ENCODE measurements at regions of chr13 and their contacts with region 1.

Region 1: GRCh38 chr13:41193919-41194824 is at the start of gene KBTBD7:
- DNase-seq: peak; percentile 98
- H3K4me3 ChIP-seq: peak within 1 kb of the TSS; percentile 42 to 65 (median 61)
- H3K27ac ChIP-seq: peak within 1 kb of the TSS; percentile 67
- H3K4me1 ChIP-seq: peaks cover 8% of the 10 kb centered on the region
- H3K27me3 ChIP-seq: no peaks in the 10 kb centered on the region
- CTCF ChIP-seq: no peak
- total RNA-seq, gene KBTBD7: 4.3 to 7.2 TPM

Region 2: GRCh38 chr13:40895227-40896184 is 298.7 kb before region 1 on chr13:
- CTCF ChIA-PET with region 1: no interaction called
- dilution Hi-C with region 1: no loop called
- in situ Hi-C with region 1: no loop called
- intact Hi-C with region 1: no loop called
- DNase-seq: peak; percentile 75
- H3K4me3 ChIP-seq: no peak overlapping the region
- H3K27ac ChIP-seq: no peak overlapping the region
- H3K4me1 ChIP-seq: no peaks in the 10 kb centered on the region
- H3K27me3 ChIP-seq: no peaks in the 10 kb centered on the region
- CTCF ChIP-seq: no peak

Region 3: GRCh38 chr13:40992678-40993518 is 201.3 kb before region 1 on chr13:
- CTCF ChIA-PET with region 1: no interaction called
- dilution Hi-C with region 1: no loop called
- in situ Hi-C with region 1: no loop called
- intact Hi-C with region 1: loop called (anchors 5 kb)
- DNase-seq: no peak
- H3K4me3 ChIP-seq: no peak overlapping the region
- H3K27ac ChIP-seq: peak overlapping the region; percentile 88
- H3K4me1 ChIP-seq: peaks cover 28% of the 10 kb centered on the region
- H3K27me3 ChIP-seq: no peaks in the 10 kb centered on the region
- CTCF ChIP-seq: peak in 1 of 2 donors; percentile 16

Region 4: GRCh38 chr13:41061075-41061913 is 132.9 kb before region 1 on chr13 and contains the start of gene WBP4:
- CTCF ChIA-PET with region 1: no interaction called
- dilution Hi-C with region 1: no loop called
- in situ Hi-C with region 1: loop called in 1 of 2 experiments (anchors 10 kb)
- intact Hi-C with region 1: loop called (anchors 1 kb)
- DNase-seq: peak; percentile 97
- H3K4me3 ChIP-seq: peak within 1 kb of the TSS; percentile 86 to 97 (median 87)
- H3K27ac ChIP-seq: peak within 1 kb of the TSS; percentile 99
- H3K4me1 ChIP-seq: peaks cover 25% of the 10 kb centered on the region
- H3K27me3 ChIP-seq: no peaks in the 10 kb centered on the region
- CTCF ChIP-seq: peak in 1 of 2 donors; percentile 27
- total RNA-seq, gene WBP4: 5.0 to 12.4 TPM

Region 5: GRCh38 chr13:41132512-41133152 is 61.5 kb before region 1 on chr13 and contains the start of gene KBTBD6:
- CTCF ChIA-PET with region 1: no interaction called
- dilution Hi-C with region 1: no loop called
- in situ Hi-C with region 1: loop called (anchors 5 to 10 kb)
- intact Hi-C with region 1: loop called (anchors 1 kb)
- DNase-seq: peak; percentile 100
- H3K4me3 ChIP-seq: peak within 1 kb of the TSS; percentile 76 to 93 (median 77)
- H3K27ac ChIP-seq: peak within 1 kb of the TSS; percentile 97
- H3K4me1 ChIP-seq: peaks cover 23% of the 10 kb centered on the region
- H3K27me3 ChIP-seq: no peaks in the 10 kb centered on the region
- CTCF ChIP-seq: no peak
- total RNA-seq, gene KBTBD6: 8.2 to 11.2 TPM

Region 6: DNA sequence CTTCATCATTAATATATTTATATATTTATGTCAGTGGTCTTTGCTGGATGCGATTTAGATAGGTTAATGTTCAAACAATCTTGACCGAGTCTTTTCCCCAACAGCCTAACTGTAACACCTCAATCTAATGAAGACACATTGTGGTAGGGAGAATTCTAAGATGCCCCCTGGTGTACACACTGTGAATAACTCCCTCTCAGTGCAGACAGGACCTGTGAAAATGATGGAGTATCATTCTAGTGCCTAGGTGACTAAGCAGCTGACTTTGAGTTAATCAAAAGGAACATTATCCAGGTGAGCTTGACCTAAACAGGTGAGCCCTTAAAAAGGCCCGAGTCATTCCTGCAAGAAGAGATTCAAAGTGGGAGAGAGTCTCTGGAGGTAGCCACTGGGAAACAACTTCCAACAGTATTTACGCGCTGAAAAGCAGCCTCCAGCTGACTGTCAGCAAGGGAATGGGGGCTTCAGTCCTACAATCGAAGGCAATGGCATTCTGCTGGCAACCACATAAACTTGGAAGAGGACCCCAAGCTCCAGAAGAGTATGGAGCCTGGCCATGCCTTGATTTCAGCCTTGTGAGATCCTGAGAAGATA is 28.2 kb after region 1 on chr13:
- CTCF ChIA-PET with region 1: interaction called, 4 read pairs
- dilution Hi-C with region 1: no loop called
- in situ Hi-C with region 1: no loop called
- intact Hi-C with region 1: loop called (anchors 2 kb)
- DNase-seq: peak; percentile 75
- H3K4me3 ChIP-seq: no peak overlapping the region
- H3K27ac ChIP-seq: no peak overlapping the region
- H3K4me1 ChIP-seq: peaks cover 19% of the 10 kb centered on the region
- H3K27me3 ChIP-seq: no peaks in the 10 kb centered on the region
- CTCF ChIP-seq: peak; percentile 81

Measured in mammary epithelial cell (primary cell).